Naive thymus-derived CD4-positive, alpha-beta T cell (primary cell): ENCODE measurements at regions of chr17 and their contacts with region 1.

Region 1: DNA sequence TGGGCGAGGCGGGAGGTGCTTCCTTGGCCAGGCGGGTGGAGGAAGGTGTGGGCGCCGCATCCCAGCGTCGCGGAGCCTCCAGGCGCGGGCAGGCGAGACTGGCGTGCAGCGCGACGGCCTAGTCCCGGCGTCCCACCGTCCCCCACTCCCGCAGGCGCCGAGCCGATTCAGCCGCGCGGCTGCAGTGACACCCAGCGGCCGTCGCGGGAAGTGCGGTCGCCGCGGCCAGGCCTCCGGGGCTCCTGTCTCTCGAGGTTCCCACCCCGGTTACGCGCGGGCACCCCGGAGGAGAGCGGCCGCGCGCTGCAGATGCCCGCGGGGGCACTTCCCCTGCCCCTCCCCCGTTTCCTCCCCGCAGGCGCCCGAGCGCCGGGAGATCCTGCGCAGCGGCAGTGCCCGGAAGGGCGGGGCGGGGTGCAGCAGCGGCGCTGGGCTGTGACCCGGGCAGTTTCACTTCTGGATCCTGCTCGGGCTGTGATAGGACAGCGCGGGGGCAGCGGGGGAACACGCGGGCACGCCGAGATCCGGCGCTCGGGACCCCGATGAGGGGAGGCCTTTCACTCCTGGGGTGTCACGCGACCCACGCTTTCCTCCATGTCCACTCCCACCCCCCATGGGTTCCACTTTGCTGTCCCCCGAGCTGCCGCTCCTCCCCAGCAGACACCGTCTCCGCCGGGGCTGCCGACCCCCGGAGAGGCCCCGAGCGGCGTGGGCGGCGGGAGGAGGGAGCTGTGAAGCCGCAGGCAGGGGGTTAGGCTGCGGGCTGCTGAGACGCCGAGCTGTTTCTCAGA is 16.6 kb downstream of the GRB7 start:
- DNase-seq: peak; percentile 94 to 99 (median 99)
- ATAC-seq: peak; percentile 90
- H3K4me3 ChIP-seq: peak overlapping the region; percentile 76
- H3K4me3 Mint-ChIP-seq: peak overlapping the region; percentile 63 to 92 (median 82)
- H3K27ac ChIP-seq: peak overlapping the region; percentile 87
- H3K27ac Mint-ChIP-seq: peak overlapping the region; percentile 87 to 99 (median 97)
- H3K4me1 ChIP-seq: peaks cover 43 to 59% of the 10 kb centered on the region in 2 donors
- H3K4me1 Mint-ChIP-seq: peaks cover 37 to 59% (median 53%) of the 10 kb centered on the region in 7 donors
- H3K27me3 ChIP-seq: no peaks in the 10 kb centered on the region
- H3K27me3 Mint-ChIP-seq: no peaks in the 10 kb centered on the region

Region 2: DNA sequence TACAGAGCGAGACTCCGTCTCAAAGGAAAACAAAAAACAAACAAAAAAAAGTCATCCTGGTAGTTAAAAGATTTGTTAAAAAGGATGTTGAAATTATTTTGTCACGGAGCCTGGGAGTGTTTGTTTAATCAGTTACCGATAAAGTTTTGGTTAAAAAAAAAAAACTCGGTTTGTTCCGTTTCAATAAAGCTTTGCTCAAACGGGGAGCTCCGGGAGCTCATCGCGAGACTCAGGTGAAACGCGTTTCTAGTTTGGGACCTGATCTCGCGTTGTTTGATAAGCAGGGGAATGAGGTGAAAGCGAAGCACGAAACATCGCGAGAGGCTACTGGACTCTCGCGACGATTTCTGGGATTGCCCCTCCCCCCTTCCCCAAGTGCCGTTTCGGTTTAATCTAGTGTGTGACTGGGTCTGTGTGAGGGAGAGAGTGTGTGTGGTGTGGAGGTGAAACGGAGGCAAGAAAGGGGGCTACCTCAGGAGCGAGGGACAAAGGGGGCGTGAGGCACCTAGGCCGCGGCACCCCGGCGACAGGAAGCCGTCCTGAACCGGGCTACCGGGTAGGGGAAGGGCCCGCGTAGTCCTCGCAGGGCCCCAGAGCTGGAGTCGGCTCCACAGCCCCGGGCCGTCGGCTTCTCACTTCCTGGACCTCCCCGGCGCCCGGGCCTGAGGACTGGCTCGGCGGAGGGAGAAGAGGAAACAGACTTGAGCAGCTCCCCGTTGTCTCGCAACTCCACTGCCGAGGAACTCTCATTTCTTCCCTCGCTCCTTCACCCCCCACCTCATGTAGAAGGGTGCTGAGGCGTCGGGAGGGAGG is 293.0 kb before region 1 on chr17 and contains the start of gene CDK12:
- CTCF ChIA-PET with region 1: no interaction called
- POLR2A ChIA-PET with region 1: no interaction called
- intact Hi-C with region 1: loop called in 1 of 2 experiments (anchors 5 kb)
- DNase-seq: peak; percentile 76 to 98 (median 95)
- ATAC-seq: peak; percentile 91
- H3K4me3 ChIP-seq: peak within 1 kb of the TSS; percentile 73
- H3K4me3 Mint-ChIP-seq: peak within 1 kb of the TSS; percentile 93 to 100 (median 98)
- H3K27ac ChIP-seq: peak within 1 kb of the TSS; percentile 89
- H3K27ac Mint-ChIP-seq: peak within 1 kb of the TSS; percentile 89 to 99 (median 97)
- H3K4me1 ChIP-seq: peaks cover 8 to 13% of the 10 kb centered on the region in 2 donors
- H3K4me1 Mint-ChIP-seq: peaks cover 27 to 51% (median 41%) of the 10 kb centered on the region in 7 donors
- H3K27me3 ChIP-seq: no peaks in the 10 kb centered on the region
- H3K27me3 Mint-ChIP-seq: no peaks in the 10 kb centered on the region
- total RNA-seq, gene CDK12: 94.9 to 118 (median 112) TPM

Region 3: DNA sequence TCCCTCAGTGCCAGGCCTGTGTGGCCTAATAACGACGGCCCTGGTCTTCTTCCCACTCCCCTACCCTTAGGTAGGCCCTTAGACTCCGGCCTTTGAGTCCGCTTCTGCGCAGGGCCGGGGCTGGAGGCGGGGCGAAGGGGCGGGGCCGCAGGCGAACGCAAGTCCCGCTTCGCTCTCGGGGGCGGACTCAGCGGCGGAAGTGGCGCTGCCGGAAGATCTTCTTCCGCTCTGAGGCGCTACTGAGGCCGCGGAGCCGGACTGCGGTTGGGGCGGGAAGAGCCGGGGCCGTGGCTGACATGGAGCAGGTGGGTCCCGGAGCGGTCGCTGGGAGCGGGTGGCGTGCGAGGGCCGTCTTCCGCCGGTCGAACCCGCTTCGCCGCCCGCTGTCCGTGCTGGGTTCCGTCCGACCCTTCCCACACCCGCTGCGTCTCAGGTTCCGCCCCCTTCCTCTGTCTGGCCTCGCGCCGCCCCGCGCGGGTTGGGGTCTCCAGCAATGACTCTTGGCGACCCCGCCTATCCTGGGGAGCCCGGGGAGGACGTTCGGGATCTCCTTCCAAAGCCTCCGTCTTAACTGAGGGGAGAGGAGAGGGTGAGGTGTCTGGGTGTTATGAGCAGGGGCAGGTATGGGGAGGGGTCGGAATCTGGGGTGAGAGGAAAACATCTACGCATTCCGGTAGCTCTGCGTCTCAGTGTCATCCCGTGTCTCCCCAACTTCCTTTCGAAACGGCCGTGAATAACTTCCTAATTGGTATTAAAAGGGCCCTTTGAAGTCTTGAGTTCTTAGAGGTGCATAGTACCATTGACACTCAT is 117.2 kb before region 1 on chr17 and contains the start of gene STARD3:
- CTCF ChIA-PET with region 1: interaction called, 3 read pairs
- POLR2A ChIA-PET with region 1: interaction called, 4 read pairs
- intact Hi-C with region 1: loop called (anchors 1 to 5 kb)
- DNase-seq: peak; percentile 80 to 92 (median 86)
- ATAC-seq: peak; percentile 95
- H3K4me3 ChIP-seq: peak within 1 kb of the TSS; percentile 86
- H3K4me3 Mint-ChIP-seq: peak within 1 kb of the TSS; percentile 89 to 98 (median 95)
- H3K27ac ChIP-seq: peak within 1 kb of the TSS; percentile 92
- H3K27ac Mint-ChIP-seq: peak within 1 kb of the TSS; percentile 76 to 97 (median 92)
- H3K4me1 ChIP-seq: peaks cover 43 to 49% of the 10 kb centered on the region in 2 donors
- H3K4me1 Mint-ChIP-seq: peaks cover 40 to 71% (median 60%) of the 10 kb centered on the region in 7 donors
- H3K27me3 ChIP-seq: no peaks in the 10 kb centered on the region
- H3K27me3 Mint-ChIP-seq: peaks cover 0 to under 1% (median 0%) of the 10 kb centered on the region in 5 donors
- total RNA-seq, gene STARD3: 69.8 to 143 (median 99.3) TPM

Region 4: DNA sequence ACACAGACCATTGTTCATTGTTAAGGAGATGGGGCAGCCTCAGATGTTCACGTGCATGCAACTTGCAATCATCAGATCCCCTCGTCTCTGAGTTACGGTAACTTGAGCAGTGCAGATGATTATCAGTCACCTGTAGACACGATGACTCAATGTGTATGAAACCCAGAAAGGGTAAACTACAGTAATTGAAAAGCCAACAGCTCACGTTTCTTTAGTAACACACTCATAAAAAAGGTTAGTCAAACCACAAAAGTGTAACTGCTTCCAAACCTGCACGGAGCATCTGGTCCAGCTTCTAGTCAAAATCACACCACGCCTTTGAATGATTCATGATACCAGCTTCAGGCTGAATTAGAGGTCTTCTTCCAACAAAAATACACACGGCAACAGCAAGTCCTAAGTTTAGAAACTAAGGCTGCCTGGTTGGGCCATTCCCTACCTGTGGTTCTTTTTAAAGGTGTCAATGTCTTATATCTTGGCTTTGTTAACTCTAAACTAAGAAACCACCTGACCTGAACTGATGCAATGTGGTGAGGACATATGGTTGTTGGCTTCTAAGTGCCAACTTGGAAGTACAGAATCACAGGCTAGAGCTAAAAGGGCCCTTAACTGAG is 15.7 kb after region 1 on chr17:
- CTCF ChIA-PET with region 1: interaction called, 14 read pairs
- POLR2A ChIA-PET with region 1: interaction called, 26 read pairs
- intact Hi-C with region 1: loop called (anchors 1 kb)
- DNase-seq: peak in 7 of 9 donors; percentile 46 to 81 (median 63)
- ATAC-seq: peak; percentile 81
- H3K4me3 ChIP-seq: no peak overlapping the region
- H3K4me3 Mint-ChIP-seq: peak overlapping the region; percentile 29 to 83 (median 57)
- H3K27ac ChIP-seq: peak overlapping the region; percentile 71
- H3K27ac Mint-ChIP-seq: peak overlapping the region; percentile 78 to 98 (median 94)
- H3K4me1 ChIP-seq: peaks cover 77 to 92% of the 10 kb centered on the region in 2 donors
- H3K4me1 Mint-ChIP-seq: peaks cover 73 to 99% (median 98%) of the 10 kb centered on the region in 7 donors
- H3K27me3 ChIP-seq: no peaks in the 10 kb centered on the region
- H3K27me3 Mint-ChIP-seq: no peaks in the 10 kb centered on the region

Region 5: DNA sequence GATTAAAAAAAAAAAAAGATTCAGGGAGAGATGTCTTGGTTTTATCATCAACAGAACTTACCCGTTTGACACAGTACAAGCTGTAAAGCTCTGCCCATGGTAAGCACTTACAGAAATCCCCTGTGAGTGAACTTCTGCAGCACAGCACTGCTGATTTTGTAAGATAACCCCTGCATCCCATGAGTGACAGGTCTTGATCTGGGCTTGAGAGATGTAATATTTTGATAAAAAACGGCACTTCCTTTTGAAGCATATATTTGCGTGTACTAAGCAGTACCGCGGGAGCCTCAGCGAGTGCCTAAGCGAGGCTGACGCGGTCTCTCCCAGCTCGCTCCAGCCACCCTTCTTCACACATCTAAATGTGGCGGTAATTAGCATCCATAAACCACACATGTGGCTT is 59.3 kb after region 1 on chr17:
- CTCF ChIA-PET with region 1: interaction called, 3 read pairs
- POLR2A ChIA-PET with region 1: interaction called, 20 read pairs
- intact Hi-C with region 1: loop called (anchors 1 to 2 kb)
- DNase-seq: peak in 7 of 9 donors; percentile 62 to 89 (median 71)
- ATAC-seq: peak; percentile 97
- H3K4me3 ChIP-seq: peak overlapping the region; percentile 17
- H3K4me3 Mint-ChIP-seq: peak overlapping the region; percentile 68 to 87 (median 78)
- H3K27ac ChIP-seq: peak overlapping the region; percentile 75
- H3K27ac Mint-ChIP-seq: peak overlapping the region; percentile 83 to 97 (median 91)
- H3K4me1 ChIP-seq: peaks cover 43 to 59% of the 10 kb centered on the region in 2 donors
- H3K4me1 Mint-ChIP-seq: peaks cover 32 to 94% (median 78%) of the 10 kb centered on the region in 7 donors
- H3K27me3 ChIP-seq: no peaks in the 10 kb centered on the region
- H3K27me3 Mint-ChIP-seq: no peaks in the 10 kb centered on the region

Region 6: DNA sequence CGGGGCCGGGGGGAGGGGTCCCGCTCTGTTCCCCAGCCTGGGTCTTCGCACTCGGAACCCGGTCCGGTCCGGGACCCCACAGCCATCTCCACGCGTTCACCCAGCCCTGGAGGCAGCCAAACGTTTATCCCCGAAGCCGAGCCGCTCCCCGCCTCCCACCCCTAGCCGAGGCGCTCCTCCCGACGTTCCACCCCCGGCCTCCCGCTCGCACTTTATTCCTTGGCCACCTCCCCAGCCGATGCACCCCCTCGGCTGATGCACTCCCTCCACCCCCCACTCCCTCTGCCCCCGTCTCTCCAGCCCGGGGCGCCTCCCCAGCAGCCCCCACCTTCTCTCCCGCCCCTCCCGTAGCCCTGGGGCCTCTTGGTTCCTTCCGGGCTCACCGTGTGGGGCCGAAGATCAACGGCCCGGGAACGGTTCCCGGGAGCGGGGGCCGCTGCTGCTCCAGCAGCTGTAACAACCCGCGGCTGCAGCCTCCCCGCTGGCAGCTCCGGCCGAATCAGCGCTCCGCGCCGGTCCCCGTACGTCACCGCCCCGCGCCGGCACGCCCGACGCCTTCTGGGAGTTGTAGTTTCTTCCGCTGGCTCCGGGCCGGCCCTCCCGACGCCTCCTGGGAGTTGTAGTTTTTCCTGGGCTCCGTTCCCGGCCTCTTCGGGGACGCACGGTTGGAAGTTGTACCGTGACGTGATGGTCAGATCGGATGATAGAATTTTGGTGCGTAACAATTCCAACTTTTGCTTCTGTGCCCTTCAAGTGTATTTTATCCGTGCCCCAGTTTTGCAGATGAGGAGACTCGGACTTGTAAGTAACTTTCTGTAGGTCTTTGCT is 173.0 kb after region 1 on chr17 and contains the starts of genes LRRC3C and ORMDL3:
- CTCF ChIA-PET with region 1: no interaction called
- POLR2A ChIA-PET with region 1: interaction called, 5 read pairs
- intact Hi-C with region 1: loop called (anchors 1 kb)
- DNase-seq: peak; percentile 86 to 95 (median 92)
- ATAC-seq: peak; percentile 92
- H3K4me3 ChIP-seq: peak within 1 kb of the TSS; percentile 82
- H3K4me3 Mint-ChIP-seq: peak within 1 kb of the TSS; percentile 90 to 98 (median 92)
- H3K27ac ChIP-seq: peak within 1 kb of the TSS; percentile 87
- H3K27ac Mint-ChIP-seq: peak within 1 kb of the TSS; percentile 85 to 97 (median 93)
- H3K4me1 ChIP-seq: peaks cover 49 to 50% of the 10 kb centered on the region in 2 donors
- H3K4me1 Mint-ChIP-seq: peaks cover 20 to 59% (median 46%) of the 10 kb centered on the region in 7 donors
- H3K27me3 ChIP-seq: no peaks in the 10 kb centered on the region
- H3K27me3 Mint-ChIP-seq: no peaks in the 10 kb centered on the region
- total RNA-seq, gene LRRC3C: 0.27 TPM in 1 of 5 experiments, not detected in the others
- total RNA-seq, gene ORMDL3: 77.6 to 205 (median 110) TPM

Region 7: DNA sequence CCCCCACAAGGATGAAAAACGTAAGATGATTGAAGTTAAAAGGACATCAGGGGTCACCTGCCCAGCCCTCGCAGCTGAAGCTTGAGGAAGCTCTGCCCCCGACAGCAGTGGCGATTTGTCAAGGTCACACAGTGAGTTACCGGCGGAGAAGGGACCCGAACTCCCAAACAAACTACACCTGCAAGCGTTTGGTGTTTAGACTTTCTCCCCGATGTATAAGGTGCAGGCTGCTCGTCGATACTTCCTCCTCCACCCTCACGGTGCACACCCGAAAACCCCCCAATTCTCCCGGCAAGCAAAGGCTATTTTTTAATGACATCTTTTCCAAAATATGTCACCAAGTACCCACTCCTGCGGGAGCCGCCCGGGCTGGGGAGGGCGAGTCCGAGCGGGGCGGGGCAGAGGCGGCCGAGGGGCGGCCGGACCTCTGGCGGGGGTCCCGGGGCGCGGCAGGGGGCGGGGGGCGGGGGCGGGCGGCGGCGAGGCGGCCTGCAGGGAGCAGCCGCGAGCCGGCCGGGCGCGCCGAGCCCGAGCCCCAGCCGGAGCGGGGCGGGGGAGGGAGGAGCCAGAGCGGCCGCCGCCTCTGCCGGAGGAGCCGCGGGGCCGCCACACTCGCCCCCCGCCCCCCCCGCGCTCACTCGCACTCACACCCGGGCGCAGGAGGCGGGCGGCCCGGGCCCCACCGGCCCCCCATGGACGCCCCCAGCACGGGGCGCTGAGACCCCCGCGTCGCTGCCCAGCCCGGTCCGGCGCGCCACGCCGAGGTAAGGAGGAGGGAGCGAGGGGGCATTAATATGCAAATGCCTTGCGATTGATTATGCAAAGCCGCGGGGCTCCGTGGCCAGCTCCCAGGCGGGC is 308.2 kb after region 1 on chr17 and contains the start of gene THRA:
- CTCF ChIA-PET with region 1: no interaction called
- POLR2A ChIA-PET with region 1: no interaction called
- intact Hi-C with region 1: no loop called
- DNase-seq: peak; percentile 56 to 77 (median 71)
- ATAC-seq: peak; percentile 93
- H3K4me3 ChIP-seq: peak within 1 kb of the TSS; percentile 81
- H3K4me3 Mint-ChIP-seq: peak within 1 kb of the TSS; percentile 86 to 97 (median 94)
- H3K27ac ChIP-seq: peak within 1 kb of the TSS; percentile 84
- H3K27ac Mint-ChIP-seq: peak within 1 kb of the TSS; percentile 35 to 95 (median 89)
- H3K4me1 ChIP-seq: peaks cover 21 to 34% of the 10 kb centered on the region in 2 donors
- H3K4me1 Mint-ChIP-seq: peaks cover 32 to 50% (median 43%) of the 10 kb centered on the region in 7 donors
- H3K27me3 ChIP-seq: no peaks in the 10 kb centered on the region
- H3K27me3 Mint-ChIP-seq: peaks cover 0 to 62% (median 0%) of the 10 kb centered on the region in 5 donors
- total RNA-seq, gene THRA: 3.2 to 55.9 (median 48.4) TPM